K562 (cell line): ENCODE measurements at regions of chr10 and their contacts with region 1.

Region 1: DNA sequence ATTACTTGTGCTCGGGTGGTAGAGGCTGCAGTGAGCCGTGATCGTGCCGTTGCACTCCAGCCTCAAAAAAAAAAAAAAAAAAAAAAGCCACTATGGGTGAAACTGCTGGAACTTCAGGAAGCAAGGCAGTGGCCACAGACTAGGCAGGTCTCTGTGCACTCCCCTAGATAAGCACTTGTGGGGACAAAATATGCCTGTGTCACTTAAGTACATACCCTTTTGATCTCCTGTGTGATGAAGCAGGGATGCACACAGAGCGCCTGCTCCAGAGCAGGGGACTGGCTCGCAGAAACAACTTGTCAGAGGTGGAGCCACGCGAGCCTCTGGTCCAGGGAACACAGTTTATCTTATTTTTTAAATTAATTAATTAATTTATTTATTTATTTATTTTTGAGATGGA is 42.9 kb upstream of the PSAP start:
- DNase-seq: peak; percentile 54 to 94 (median 73)
- ATAC-seq: peak; percentile 94
- H3K4me3 ChIP-seq: no peak overlapping the region
- H3K27ac ChIP-seq: no peak overlapping the region
- H3K4me1 ChIP-seq: peaks cover 21 to 28% of the 10 kb centered on the region in 2 experiments
- H3K27me3 ChIP-seq: no peaks in the 10 kb centered on the region
- CTCF ChIP-seq: no peak
- EP300 ChIP-seq: peak; percentile 91
- POLR2A ChIP-seq: no peak
- RAD21 ChIP-seq: peak in 1 of 2 experiments; percentile 39; a peak in 2 of 4 replicates

Region 2: GRCh38 chr10:71314028-71314693 is 579.8 kb before region 1 on chr10:
- CTCF ChIA-PET with region 1: interaction called, 32 read pairs
- POLR2A ChIA-PET with region 1: no interaction called
- in situ Hi-C with region 1: no loop called
- intact Hi-C with region 1: loop called (anchors 1 kb)
- DNase-seq: peak; percentile 79 to 91 (median 90)
- ATAC-seq: peak; percentile 73
- H3K4me3 ChIP-seq: no peak overlapping the region
- H3K27ac ChIP-seq: no peak overlapping the region
- H3K4me1 ChIP-seq: peaks cover 8 to 9% of the 10 kb centered on the region in 2 experiments; a peak in 4 of 5 replicates
- H3K27me3 ChIP-seq: peaks cover 0 to 10% of the 10 kb centered on the region in 2 experiments; a peak in 2 of 5 replicates
- CTCF ChIP-seq: peak; percentile 68 to 82 (median 76)
- EP300 ChIP-seq: no peak
- POLR2A ChIP-seq: no peak
- RAD21 ChIP-seq: peak; percentile 64 to 78

Region 3: GRCh38 chr10:71383972-71384687 is 509.8 kb before region 1 on chr10:
- CTCF ChIA-PET with region 1: interaction called, 15 read pairs
- POLR2A ChIA-PET with region 1: no interaction called
- in situ Hi-C with region 1: no loop called
- intact Hi-C with region 1: loop called (anchors 5 kb)
- DNase-seq: peak; percentile 86 to 92 (median 90)
- ATAC-seq: peak; percentile 98
- H3K4me3 ChIP-seq: no peak overlapping the region
- H3K27ac ChIP-seq: no peak overlapping the region
- H3K4me1 ChIP-seq: peaks cover 3 to 9% of the 10 kb centered on the region in 2 experiments; a peak in 3 of 5 replicates
- H3K27me3 ChIP-seq: peaks cover 5 to 10% of the 10 kb centered on the region in 2 experiments
- CTCF ChIP-seq: peak; percentile 95 to 98 (median 95)
- EP300 ChIP-seq: no peak
- POLR2A ChIP-seq: no peak
- RAD21 ChIP-seq: peak; percentile 82 to 92

Region 4: GRCh38 chr10:71780722-71781121 is 113.2 kb before region 1 on chr10:
- CTCF ChIA-PET with region 1: interaction called, 22 read pairs
- POLR2A ChIA-PET with region 1: no interaction called
- in situ Hi-C with region 1: no loop called
- intact Hi-C with region 1: loop called (anchors 1 kb)
- DNase-seq: peak; percentile 38 to 66 (median 50)
- ATAC-seq: peak; percentile 68
- H3K4me3 ChIP-seq: no peak overlapping the region
- H3K27ac ChIP-seq: no peak overlapping the region
- H3K4me1 ChIP-seq: peaks cover 0 to 3% of the 10 kb centered on the region in 2 experiments; a peak in 2 of 5 replicates
- H3K27me3 ChIP-seq: peaks cover 26 to 57% of the 10 kb centered on the region in 2 experiments
- CTCF ChIP-seq: peak; percentile 67 to 78 (median 68)
- EP300 ChIP-seq: no peak
- POLR2A ChIP-seq: no peak
- RAD21 ChIP-seq: peak; percentile 65 to 83

Region 5: GRCh38 chr10:72030762-72031543 is 137.0 kb after region 1 on chr10:
- CTCF ChIA-PET with region 1: no interaction called
- POLR2A ChIA-PET with region 1: no interaction called
- in situ Hi-C with region 1: no loop called
- intact Hi-C with region 1: no loop called
- DNase-seq: no peak
- ATAC-seq: peak; percentile 41
- H3K4me3 ChIP-seq: no peak overlapping the region
- H3K27ac ChIP-seq: no peak overlapping the region
- H3K4me1 ChIP-seq: peaks cover 4 to 6% of the 10 kb centered on the region in 2 experiments; a peak in 3 of 5 replicates
- H3K27me3 ChIP-seq: peaks cover 32 to 61% of the 10 kb centered on the region in 2 experiments
- CTCF ChIP-seq: no peak
- EP300 ChIP-seq: no peak
- POLR2A ChIP-seq: no peak
- RAD21 ChIP-seq: no peak

Region 6: GRCh38 chr10:72083790-72084459 is 190.0 kb after region 1 on chr10:
- CTCF ChIA-PET with region 1: no interaction called
- POLR2A ChIA-PET with region 1: no interaction called
- in situ Hi-C with region 1: no loop called
- intact Hi-C with region 1: no loop called
- DNase-seq: no peak
- ATAC-seq: peak; percentile 20; the same call in 2 of the 3 replicates
- H3K4me3 ChIP-seq: no peak overlapping the region
- H3K27ac ChIP-seq: no peak overlapping the region
- H3K4me1 ChIP-seq: peaks cover 0 to 28% of the 10 kb centered on the region in 2 experiments; a peak in 2 of 5 replicates
- H3K27me3 ChIP-seq: no peaks in the 10 kb centered on the region
- CTCF ChIP-seq: no peak
- EP300 ChIP-seq: no peak
- POLR2A ChIP-seq: no peak
- RAD21 ChIP-seq: no peak

Region 7: GRCh38 chr10:72223743-72224101 is 329.8 kb after region 1 on chr10:
- CTCF ChIA-PET with region 1: interaction called, 27 read pairs
- POLR2A ChIA-PET with region 1: no interaction called
- in situ Hi-C with region 1: no loop called
- intact Hi-C with region 1: no loop called
- DNase-seq: no peak
- ATAC-seq: no peak
- H3K4me3 ChIP-seq: no peak overlapping the region
- H3K27ac ChIP-seq: no peak overlapping the region
- H3K4me1 ChIP-seq: peaks cover 4 to 15% of the 10 kb centered on the region in 2 experiments; a peak in 3 of 5 replicates
- H3K27me3 ChIP-seq: no peaks in the 10 kb centered on the region
- CTCF ChIP-seq: no peak
- EP300 ChIP-seq: no peak
- POLR2A ChIP-seq: no peak
- RAD21 ChIP-seq: no peak